ENCODE measurements at regions of chr1 and their contacts with region 1.

Region 1: GRCh38 chr1:44417351-44418021 is 12.4 kb downstream of the RNF220 start:
- DNase-seq: peak; percentile 62 to 95 (median 67)

Region 2: DNA sequence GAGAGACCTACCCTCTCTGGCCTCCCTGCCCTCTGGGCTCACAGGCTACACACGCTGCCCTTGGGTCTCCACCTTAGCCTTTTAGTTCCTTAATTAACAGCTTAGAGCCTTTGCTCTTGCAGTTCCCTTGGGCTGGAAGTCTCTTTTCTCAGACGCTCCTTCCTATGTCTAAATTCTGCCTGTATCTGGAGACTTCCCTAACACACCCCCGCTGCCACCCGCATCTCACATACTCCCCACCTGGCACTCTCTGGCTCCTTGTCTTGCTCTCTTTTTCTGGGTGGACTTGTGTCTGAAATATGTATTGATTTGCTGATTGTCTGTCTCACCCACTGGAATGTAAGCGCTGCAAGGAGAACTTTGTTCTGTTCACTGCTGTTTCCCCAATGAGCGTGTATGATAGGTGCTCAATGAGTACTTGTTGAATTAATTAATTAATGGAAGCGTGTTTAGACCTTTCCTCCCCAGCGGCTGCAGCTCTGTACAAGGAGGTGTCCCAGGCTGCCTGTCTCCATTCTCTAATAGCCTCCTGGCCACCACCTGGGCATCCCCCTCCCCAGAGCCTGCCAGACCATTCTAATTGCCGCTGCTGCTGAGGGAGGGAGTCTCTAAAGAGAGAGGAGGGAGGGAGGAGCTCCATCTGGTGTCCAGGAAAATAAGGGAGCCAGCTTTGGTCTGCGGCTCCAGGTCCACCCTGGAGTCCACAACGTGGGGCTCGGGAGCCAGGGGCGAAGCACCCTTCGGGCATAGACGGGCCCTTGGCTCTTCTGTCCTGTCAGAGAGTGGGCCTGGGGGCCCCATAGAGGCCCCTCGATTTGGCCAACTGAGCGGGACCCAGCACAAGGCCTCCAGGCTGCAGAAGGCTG is 82.9 kb after region 1 on chr1:
- intact Hi-C with region 1: loop called (anchors 5 kb)
- DNase-seq: peak in 6 of 10 donors; percentile 48 to 93 (median 68)

Measured in posterior cingulate gyrus (tissue), 11 donors.